Panc1 (cell line): ENCODE measurements at regions of chr4 and their contacts with region 1.

Region 1: DNA sequence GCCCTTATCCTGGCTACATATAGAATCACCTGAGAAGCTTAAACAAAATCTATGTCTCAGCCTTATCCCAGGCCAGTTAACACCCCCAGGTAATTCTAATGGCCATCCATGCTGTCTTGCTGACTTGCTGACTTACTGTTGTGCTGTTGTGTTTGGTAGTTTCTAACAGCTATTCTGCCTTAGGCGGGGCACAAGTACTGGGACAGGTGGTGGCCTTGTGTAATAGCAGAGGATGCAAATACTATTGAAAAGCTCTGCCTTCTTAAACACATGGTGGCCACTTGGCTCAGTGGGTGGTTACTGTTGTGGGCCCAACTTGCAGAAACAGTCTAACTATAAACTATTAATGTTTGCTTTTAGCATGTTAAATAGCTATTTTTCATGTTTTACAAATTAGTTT is 56.2 kb downstream of the CDS1 start:
- DNase-seq: no peak
- ATAC-seq: no peak
- H3K4me3 ChIP-seq: no peak overlapping the region
- H3K27ac ChIP-seq: no peak overlapping the region
- H3K4me1 ChIP-seq: no peaks in the 10 kb centered on the region
- H3K27me3 ChIP-seq: no peaks in the 10 kb centered on the region
- CTCF ChIP-seq: no peak

Region 2: DNA sequence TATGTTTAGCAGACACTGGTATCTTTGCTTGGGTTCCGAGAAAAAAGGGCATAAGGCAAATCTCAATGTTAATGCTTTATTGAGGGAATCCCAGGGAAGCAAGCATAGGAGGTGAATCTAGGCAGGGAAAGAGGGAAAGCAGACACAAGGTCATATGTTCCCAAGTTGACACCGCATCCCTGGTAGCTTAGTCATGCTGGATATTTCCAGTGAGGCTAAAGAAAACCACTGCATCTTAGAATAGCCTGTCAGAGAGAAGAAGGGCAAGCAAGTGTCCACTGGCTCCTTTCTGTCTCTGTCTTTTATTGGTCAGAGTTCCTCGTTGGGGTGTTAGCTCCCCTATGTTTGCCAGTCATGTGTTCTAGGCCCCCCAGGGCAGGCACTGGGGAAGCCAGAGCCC is 244.8 kb before region 1 on chr4:
- CTCF ChIA-PET with region 1: no interaction called
- POLR2A ChIA-PET with region 1: no interaction called
- in situ Hi-C with region 1: no loop called
- intact Hi-C with region 1: no loop called
- DNase-seq: no peak
- ATAC-seq: no peak
- H3K4me3 ChIP-seq: no peak overlapping the region
- H3K27ac ChIP-seq: no peak overlapping the region
- H3K4me1 ChIP-seq: no peaks in the 10 kb centered on the region
- H3K27me3 ChIP-seq: no peaks in the 10 kb centered on the region; the same call in 1 of the 2 replicates
- CTCF ChIP-seq: no peak

Region 3: GRCh38 chr4:84952009-84952408 is 312.9 kb after region 1 on chr4:
- CTCF ChIA-PET with region 1: no interaction called
- POLR2A ChIA-PET with region 1: no interaction called
- in situ Hi-C with region 1: no loop called
- intact Hi-C with region 1: no loop called
- DNase-seq: peak; percentile 18
- ATAC-seq: peak; percentile 62; the same call in 1 of the 2 replicates
- H3K4me3 ChIP-seq: no peak overlapping the region
- H3K27ac ChIP-seq: no peak overlapping the region
- H3K4me1 ChIP-seq: peaks cover 9% of the 10 kb centered on the region
- H3K27me3 ChIP-seq: no peaks in the 10 kb centered on the region
- CTCF ChIP-seq: no peak

Region 4: GRCh38 chr4:85543832-85544231 is 904.7 kb after region 1 on chr4:
- CTCF ChIA-PET with region 1: no interaction called
- POLR2A ChIA-PET with region 1: interaction called, 14 read pairs
- in situ Hi-C with region 1: no loop called
- intact Hi-C with region 1: no loop called
- DNase-seq: no peak
- ATAC-seq: no peak
- H3K4me3 ChIP-seq: no peak overlapping the region
- H3K27ac ChIP-seq: peak overlapping the region; percentile 26; the same call in 1 of the 2 replicates
- H3K4me1 ChIP-seq: no peaks in the 10 kb centered on the region; the same call in 1 of the 2 replicates
- H3K27me3 ChIP-seq: no peaks in the 10 kb centered on the region
- CTCF ChIP-seq: no peak